AG04449 (cell line): ENCODE measurements at regions of chr11 and their contacts with region 1.

Region 1: GRCh38 chr11:31397239-31397834 is 27.7 kb downstream of the DNAJC24 start:
- DNase-seq: no peak
- H3K4me3 ChIP-seq: no peak overlapping the region
- CTCF ChIP-seq: peak; percentile 30

Region 2: GRCh38 chr11:31408201-31408600 is 10.9 kb after region 1 on chr11:
- CTCF ChIA-PET with region 1: interaction called, 17 read pairs
- POLR2A ChIA-PET with region 1: no interaction called
- DNase-seq: no peak
- H3K4me3 ChIP-seq: no peak overlapping the region
- CTCF ChIP-seq: no peak

Region 3: GRCh38 chr11:31558001-31558400 is 160.7 kb after region 1 on chr11:
- CTCF ChIA-PET with region 1: no interaction called
- POLR2A ChIA-PET with region 1: no interaction called
- DNase-seq: no peak
- H3K4me3 ChIP-seq: no peak overlapping the region
- CTCF ChIP-seq: no peak

Region 4: GRCh38 chr11:32006799-32007388 is 609.6 kb after region 1 on chr11:
- CTCF ChIA-PET with region 1: interaction called, 17 read pairs
- POLR2A ChIA-PET with region 1: no interaction called
- DNase-seq: peak; percentile 5
- H3K4me3 ChIP-seq: no peak overlapping the region
- CTCF ChIP-seq: peak; percentile 80